GM12878 (cell line): ENCODE measurements at regions of chr18 and their contacts with region 1.

Region 1: GRCh38 chr18:14117606-14118005 is 14.6 kb downstream of the ZNF519 start:
- DNase-seq: no peak
- ATAC-seq: no peak
- H3K4me3 ChIP-seq: no peak overlapping the region
- H3K27ac ChIP-seq: no peak overlapping the region
- H3K4me1 ChIP-seq: no peaks in the 10 kb centered on the region
- H3K27me3 ChIP-seq: no peaks in the 10 kb centered on the region
- CTCF ChIP-seq: no peak
- EP300 ChIP-seq: no peak
- POLR2A ChIP-seq: no peak
- RAD21 ChIP-seq: no peak

Region 2: GRCh38 chr18:14093307-14093915 is 24.2 kb before region 1 on chr18:
- CTCF ChIA-PET with region 1: no interaction called
- POLR2A ChIA-PET with region 1: no interaction called
- RAD21 ChIA-PET with region 1: no interaction called
- SMC1A ChIA-PET with region 1: no interaction called
- in situ Hi-C with region 1: no loop called
- intact Hi-C with region 1: no loop called
- DNase-seq: no peak
- ATAC-seq: 0 out of 3 replicates have a peak, but pooled peaks have one; percentile 26
- H3K4me3 ChIP-seq: no peak overlapping the region
- H3K27ac ChIP-seq: no peak overlapping the region
- H3K4me1 ChIP-seq: no peaks in the 10 kb centered on the region
- H3K27me3 ChIP-seq: no peaks in the 10 kb centered on the region
- CTCF ChIP-seq: no peak
- EP300 ChIP-seq: no peak
- POLR2A ChIP-seq: no peak
- RAD21 ChIP-seq: no peak

Region 3: GRCh38 chr18:14221692-14222091 is 104.1 kb after region 1 on chr18:
- CTCF ChIA-PET with region 1: no interaction called
- POLR2A ChIA-PET with region 1: no interaction called
- RAD21 ChIA-PET with region 1: no interaction called
- SMC1A ChIA-PET with region 1: no interaction called
- in situ Hi-C with region 1: loop called (anchors 25 kb)
- intact Hi-C with region 1: no loop called
- DNase-seq: no peak
- ATAC-seq: no peak
- H3K4me3 ChIP-seq: no peak overlapping the region
- H3K27ac ChIP-seq: no peak overlapping the region
- H3K4me1 ChIP-seq: no peaks in the 10 kb centered on the region
- H3K27me3 ChIP-seq: no peaks in the 10 kb centered on the region
- CTCF ChIP-seq: no peak
- EP300 ChIP-seq: no peak
- POLR2A ChIP-seq: no peak
- RAD21 ChIP-seq: no peak